ENCODE measurements at regions of chr1 and their contacts with region 1.

Region 1: DNA sequence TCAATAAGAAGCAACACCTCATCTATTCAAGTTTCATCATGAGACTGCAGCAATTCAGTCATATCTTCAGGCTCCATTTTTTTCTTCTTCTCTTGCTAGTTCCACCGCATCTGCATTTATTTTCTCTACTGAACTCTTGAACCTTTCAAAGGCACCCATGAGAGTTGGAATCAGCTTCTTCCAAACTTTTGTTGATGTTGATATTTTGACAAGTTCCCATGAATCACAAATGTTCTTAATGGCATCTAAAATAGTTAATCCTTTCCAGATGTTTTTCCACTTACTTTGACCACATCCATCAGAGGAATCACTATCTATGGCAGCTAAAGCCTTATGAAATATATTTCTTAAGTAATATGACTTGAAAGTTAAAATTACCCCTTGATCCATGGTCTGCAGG is 434.3 kb downstream of the GPATCH2 start:
- DNase-seq: no peak

Region 2: GRCh38 chr1:216064643-216065042 is 1132.0 kb before region 1 on chr1:
- intact Hi-C with region 1: no loop called
- DNase-seq: no peak

Region 3: GRCh38 chr1:217089361-217090014 is 107.1 kb before region 1 on chr1:
- intact Hi-C with region 1: no loop called
- DNase-seq: no peak

Region 4: DNA sequence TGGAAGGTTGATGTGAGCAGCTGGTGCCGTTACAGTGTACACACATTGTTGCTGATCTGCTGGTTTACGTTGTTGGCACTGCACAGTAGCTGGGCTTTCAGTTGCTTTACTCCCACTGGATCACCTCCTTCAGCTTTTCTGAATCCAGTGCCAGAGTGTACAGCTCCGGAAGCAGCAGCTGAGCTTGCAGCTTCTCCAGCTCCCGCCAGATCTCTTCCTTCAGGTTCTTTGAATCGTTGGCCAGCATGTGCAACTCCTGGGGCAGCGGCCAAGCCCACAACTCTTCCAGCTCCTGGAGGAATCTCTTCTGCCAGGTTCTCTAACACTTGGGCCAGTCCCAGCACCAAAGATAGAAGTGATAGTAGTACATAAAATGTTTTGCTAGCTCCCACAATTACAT is 938.8 kb after region 1 on chr1:
- intact Hi-C with region 1: loop called in 1 of 2 experiments (anchors 5 kb)
- DNase-seq: no peak